GM12878 (cell line): ENCODE measurements at regions of chr13 and their contacts with region 1.

Region 1: GRCh38 chr13:67048084-67048820 is 181.9 kb downstream of the PCDH9 start:
- DNase-seq: no peak
- ATAC-seq: peak; percentile 81
- H3K4me3 ChIP-seq: no peak overlapping the region
- H3K27ac ChIP-seq: no peak overlapping the region
- H3K4me1 ChIP-seq: no peaks in the 10 kb centered on the region
- H3K27me3 ChIP-seq: no peaks in the 10 kb centered on the region
- CTCF ChIP-seq: no peak
- EP300 ChIP-seq: no peak
- POLR2A ChIP-seq: no peak
- RAD21 ChIP-seq: no peak

Region 2: DNA sequence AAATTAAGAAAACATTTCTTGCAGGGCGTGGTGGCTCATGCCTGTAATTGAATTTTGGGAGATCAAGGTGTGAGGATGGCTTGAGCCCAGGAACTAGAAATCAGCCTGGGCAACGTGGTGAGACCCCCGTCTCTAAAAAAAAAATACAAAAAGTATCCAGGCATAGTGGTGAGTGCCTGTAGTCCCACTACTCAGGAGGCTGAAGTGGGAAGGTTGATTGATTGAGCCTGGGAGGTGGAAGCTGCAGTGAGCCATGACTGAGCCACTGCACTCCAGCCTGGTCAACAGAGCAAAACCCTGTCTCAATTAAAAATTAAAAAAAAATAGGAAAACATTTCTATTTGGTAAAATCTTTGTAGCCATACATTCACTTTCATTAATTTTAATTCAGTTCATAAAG is 344.7 kb before region 1 on chr13:
- CTCF ChIA-PET with region 1: no interaction called
- POLR2A ChIA-PET with region 1: no interaction called
- RAD21 ChIA-PET with region 1: no interaction called
- SMC1A ChIA-PET with region 1: no interaction called
- in situ Hi-C with region 1: no loop called
- intact Hi-C with region 1: no loop called
- DNase-seq: no peak
- ATAC-seq: no peak
- H3K4me3 ChIP-seq: no peak overlapping the region
- H3K27ac ChIP-seq: no peak overlapping the region
- H3K4me1 ChIP-seq: no peaks in the 10 kb centered on the region
- H3K27me3 ChIP-seq: no peaks in the 10 kb centered on the region
- CTCF ChIP-seq: no peak
- EP300 ChIP-seq: no peak
- POLR2A ChIP-seq: no peak
- RAD21 ChIP-seq: no peak

Region 3: GRCh38 chr13:67061750-67062149 is 13.5 kb after region 1 on chr13:
- CTCF ChIA-PET with region 1: interaction called, 3 read pairs
- POLR2A ChIA-PET with region 1: no interaction called
- RAD21 ChIA-PET with region 1: no interaction called
- SMC1A ChIA-PET with region 1: interaction called, 15 read pairs
- in situ Hi-C with region 1: no loop called
- intact Hi-C with region 1: no loop called
- DNase-seq: no peak
- ATAC-seq: no peak
- H3K4me3 ChIP-seq: no peak overlapping the region
- H3K27ac ChIP-seq: no peak overlapping the region
- H3K4me1 ChIP-seq: no peaks in the 10 kb centered on the region
- H3K27me3 ChIP-seq: no peaks in the 10 kb centered on the region
- CTCF ChIP-seq: no peak
- EP300 ChIP-seq: no peak
- POLR2A ChIP-seq: no peak
- RAD21 ChIP-seq: no peak

Region 4: GRCh38 chr13:67568205-67568604 is 520.0 kb after region 1 on chr13:
- CTCF ChIA-PET with region 1: no interaction called
- POLR2A ChIA-PET with region 1: no interaction called
- RAD21 ChIA-PET with region 1: no interaction called
- SMC1A ChIA-PET with region 1: no interaction called
- in situ Hi-C with region 1: no loop called
- intact Hi-C with region 1: no loop called
- DNase-seq: no peak
- ATAC-seq: no peak
- H3K4me3 ChIP-seq: no peak overlapping the region
- H3K27ac ChIP-seq: no peak overlapping the region
- H3K4me1 ChIP-seq: no peaks in the 10 kb centered on the region
- H3K27me3 ChIP-seq: no peaks in the 10 kb centered on the region
- CTCF ChIP-seq: no peak
- EP300 ChIP-seq: no peak
- POLR2A ChIP-seq: no peak
- RAD21 ChIP-seq: no peak